Stomach (tissue), 19 donors: ENCODE measurements at regions of chr20 and their contacts with region 1.

Region 1: GRCh38 chr20:54649511-54649962 is 174.1 kb downstream of the DOK5 start:
- DNase-seq: peak; percentile 92 to 94
- H3K4me3 ChIP-seq: no peak overlapping the region
- H3K27ac ChIP-seq: no peak overlapping the region
- H3K4me1 ChIP-seq: peaks cover 0 to 15% (median 7%) of the 10 kb centered on the region in 4 donors
- H3K27me3 ChIP-seq: no peaks in the 10 kb centered on the region
- CTCF ChIP-seq: peak in 5 of 7 experiments; percentile 62 to 76 (median 73)
- EP300 ChIP-seq: no peak
- POLR2A ChIP-seq: no peak

Region 2: DNA sequence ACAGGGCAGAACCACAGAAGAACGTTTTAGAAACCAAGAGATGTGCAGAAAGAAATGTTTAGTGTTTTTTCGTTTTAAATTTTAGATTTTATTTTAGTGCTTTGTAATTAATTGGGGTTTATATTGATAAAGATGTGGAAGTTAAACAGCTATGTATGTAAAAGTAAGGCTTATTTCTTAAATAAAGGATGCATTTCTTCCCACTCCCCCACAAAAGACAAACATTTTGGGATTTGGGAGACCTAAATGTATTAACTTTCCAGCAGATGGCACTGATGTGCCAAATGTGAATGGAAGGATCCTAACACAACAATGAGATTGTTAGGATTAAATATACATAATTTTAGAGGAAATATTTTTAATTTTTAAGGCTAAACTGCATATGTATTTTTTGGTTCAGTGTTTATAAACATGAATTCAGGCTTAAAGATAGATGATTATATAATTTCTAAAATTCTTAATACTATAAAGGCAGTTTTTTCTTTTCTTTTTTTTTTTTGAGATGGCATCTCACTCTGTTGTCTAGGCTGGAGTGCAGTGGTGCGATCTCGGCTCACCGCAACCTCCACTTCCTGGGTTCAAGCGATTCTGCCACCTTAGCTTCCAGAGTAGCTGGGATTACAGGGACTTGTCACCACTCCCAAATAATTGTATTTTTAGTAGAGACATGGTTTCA is 429.6 kb before region 1 on chr20:
- intact Hi-C with region 1: loop called (anchors 10 kb)
- DNase-seq: peak in 1 of 2 donors; percentile 65
- H3K4me3 ChIP-seq: no peak overlapping the region
- H3K27ac ChIP-seq: no peak overlapping the region
- H3K4me1 ChIP-seq: peaks cover 0 to 16% (median 5%) of the 10 kb centered on the region in 4 donors
- H3K27me3 ChIP-seq: no peaks in the 10 kb centered on the region
- CTCF ChIP-seq: peak in 4 of 7 experiments; percentile 5 to 41 (median 16)
- EP300 ChIP-seq: no peak
- POLR2A ChIP-seq: no peak

Region 3: GRCh38 chr20:54793291-54794136 is 144.0 kb after region 1 on chr20:
- intact Hi-C with region 1: no loop called
- DNase-seq: no peak
- H3K4me3 ChIP-seq: no peak overlapping the region
- H3K27ac ChIP-seq: no peak overlapping the region
- H3K4me1 ChIP-seq: no peaks in the 10 kb centered on the region
- H3K27me3 ChIP-seq: no peaks in the 10 kb centered on the region
- CTCF ChIP-seq: no peak
- EP300 ChIP-seq: no peak
- POLR2A ChIP-seq: no peak